Panc1 (cell line): ENCODE measurements at regions of chr10 and their contacts with region 1.

Region 1: GRCh38 chr10:30254926-30255325 is 94.2 kb downstream of the MTPAP start:
- DNase-seq: no peak
- ATAC-seq: no peak
- H3K4me3 ChIP-seq: no peak overlapping the region
- H3K27ac ChIP-seq: no peak overlapping the region
- H3K4me1 ChIP-seq: no peaks in the 10 kb centered on the region
- H3K27me3 ChIP-seq: no peaks in the 10 kb centered on the region
- CTCF ChIP-seq: no peak

Region 2: GRCh38 chr10:30002104-30002950 is 252.6 kb before region 1 on chr10:
- CTCF ChIA-PET with region 1: no interaction called
- POLR2A ChIA-PET with region 1: no interaction called
- in situ Hi-C with region 1: no loop called
- intact Hi-C with region 1: no loop called
- DNase-seq: peak; percentile 58
- ATAC-seq: peak; percentile 93
- H3K4me3 ChIP-seq: no peak overlapping the region
- H3K27ac ChIP-seq: no peak overlapping the region
- H3K4me1 ChIP-seq: peaks cover 9% of the 10 kb centered on the region; the same call in 1 of the 2 replicates
- H3K27me3 ChIP-seq: no peaks in the 10 kb centered on the region
- CTCF ChIP-seq: peak; percentile 90

Region 3: GRCh38 chr10:30270247-30270646 is 15.3 kb after region 1 on chr10:
- CTCF ChIA-PET with region 1: no interaction called
- POLR2A ChIA-PET with region 1: no interaction called
- in situ Hi-C with region 1: no loop called
- intact Hi-C with region 1: no loop called
- DNase-seq: no peak
- ATAC-seq: no peak
- H3K4me3 ChIP-seq: no peak overlapping the region
- H3K27ac ChIP-seq: no peak overlapping the region
- H3K4me1 ChIP-seq: no peaks in the 10 kb centered on the region
- H3K27me3 ChIP-seq: no peaks in the 10 kb centered on the region
- CTCF ChIP-seq: peak; percentile 33; the same call in 1 of the 2 replicates

Region 4: DNA sequence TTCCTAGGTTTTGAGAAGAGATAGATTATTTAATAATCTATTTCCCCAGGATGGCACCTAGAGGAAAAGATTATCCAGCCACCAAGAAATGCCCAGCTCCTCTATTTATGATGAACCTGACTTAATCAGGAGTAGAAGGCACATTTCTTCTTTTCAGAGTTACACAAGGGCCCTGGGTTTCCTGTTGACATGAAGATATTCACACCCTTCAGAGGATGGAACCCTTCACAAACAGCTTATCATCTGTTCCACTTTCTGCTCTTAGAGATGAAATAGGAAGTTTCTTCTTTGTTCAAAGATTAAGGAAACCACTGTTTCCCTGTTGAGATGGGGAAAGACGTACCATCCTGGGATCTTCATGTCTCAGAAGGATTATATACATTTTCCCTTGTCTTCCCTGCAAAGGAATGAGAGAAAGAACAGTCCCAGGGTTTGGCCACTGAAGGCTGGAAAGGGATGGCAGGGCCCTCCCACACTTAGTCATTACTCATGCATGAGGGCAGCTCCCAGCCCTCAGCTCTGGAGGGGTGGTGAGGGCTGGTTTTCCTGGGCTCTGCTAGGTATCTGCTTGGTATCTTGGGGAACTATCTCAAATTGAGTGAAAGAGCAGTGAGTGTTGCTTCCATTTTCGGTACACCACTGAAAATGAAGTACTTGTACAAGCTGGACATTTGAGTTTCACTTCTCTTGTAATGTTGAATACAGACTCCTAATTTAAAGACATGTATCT is 30.1 kb after region 1 on chr10:
- CTCF ChIA-PET with region 1: no interaction called
- POLR2A ChIA-PET with region 1: interaction called, 17 read pairs
- in situ Hi-C with region 1: no loop called
- intact Hi-C with region 1: no loop called
- DNase-seq: no peak
- ATAC-seq: no peak
- H3K4me3 ChIP-seq: no peak overlapping the region
- H3K27ac ChIP-seq: no peak overlapping the region
- H3K4me1 ChIP-seq: no peaks in the 10 kb centered on the region
- H3K27me3 ChIP-seq: no peaks in the 10 kb centered on the region
- CTCF ChIP-seq: no peak